ENCODE measurements at regions of chr19 and their contacts with region 1.

Region 1: DNA sequence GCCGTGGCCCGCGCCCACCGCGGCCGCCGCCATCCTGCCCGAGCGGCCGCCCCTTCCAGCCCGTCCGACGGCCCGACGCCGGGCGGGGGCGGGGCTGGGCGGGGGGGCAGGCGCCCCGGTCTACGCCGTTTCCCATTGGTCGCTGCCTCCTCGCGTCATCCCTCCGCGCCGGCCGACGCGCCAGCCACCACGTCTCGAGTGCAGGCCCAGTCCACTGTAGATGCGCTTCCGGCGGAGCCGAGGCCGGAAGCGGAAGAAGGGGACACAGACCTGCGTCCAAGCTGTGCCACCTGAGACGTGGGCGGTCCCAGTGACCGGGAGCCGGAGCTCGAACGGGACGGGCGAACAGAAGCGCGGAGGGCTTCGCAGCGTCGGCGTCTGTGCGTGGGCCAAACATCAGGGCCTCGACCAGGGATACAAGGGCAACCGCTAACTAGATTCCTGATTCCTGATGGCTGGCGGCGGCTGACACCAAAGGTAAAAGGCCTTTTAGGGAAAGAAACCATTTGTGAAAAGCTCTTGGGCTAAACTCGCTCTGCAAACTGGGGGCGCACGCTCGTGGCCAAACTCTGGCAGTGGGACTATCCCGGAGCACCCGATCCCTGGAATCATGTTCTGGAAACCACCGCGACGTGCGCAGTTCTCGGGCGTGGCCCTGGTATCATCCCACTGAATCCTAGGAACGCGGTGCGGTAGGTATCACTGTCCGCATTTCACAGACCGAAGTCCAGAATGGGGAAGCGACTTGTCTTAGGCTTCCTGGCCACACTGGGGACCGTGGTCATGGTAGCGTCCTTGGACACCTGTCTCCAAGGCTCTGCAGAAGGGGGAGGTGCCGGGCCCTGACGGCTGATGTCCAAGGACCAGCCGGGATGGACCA is at the start of gene SLC35E1:
- DNase-seq: peak; percentile 77
- H3K4me3 ChIP-seq: peak within 1 kb of the TSS; percentile 72 to 95 (median 84)
- H3K27ac ChIP-seq: peak within 1 kb of the TSS; percentile 90 to 95 (median 92)
- H3K4me1 ChIP-seq: peaks cover 15 to 63% (median 36%) of the 10 kb centered on the region in 3 donors
- H3K27me3 ChIP-seq: no peaks in the 10 kb centered on the region
- CTCF ChIP-seq: no peak
- POLR2A ChIP-seq: peak in 3 of 4 donors; percentile 68 to 77 (median 74)
- total RNA-seq, gene SLC35E1: 22.6 to 29.4 (median 25.3) TPM

Region 2: GRCh38 chr19:16628183-16628983 is 55.8 kb after region 1 on chr19 and contains the start of gene MED26:
- intact Hi-C with region 1: loop called (anchors 10 kb)
- DNase-seq: peak; percentile 82
- H3K4me3 ChIP-seq: peak within 1 kb of the TSS; percentile 97 to 100 (median 98)
- H3K27ac ChIP-seq: peak within 1 kb of the TSS; percentile 92 to 98 (median 94)
- H3K4me1 ChIP-seq: peaks cover 19 to 47% (median 19%) of the 10 kb centered on the region in 3 donors
- H3K27me3 ChIP-seq: no peaks in the 10 kb centered on the region
- CTCF ChIP-seq: peak in 2 of 6 experiments; percentile 17 to 44
- POLR2A ChIP-seq: peak in 3 of 4 donors; percentile 9 to 88 (median 80)
- total RNA-seq, gene MED26: 5.1 to 9.9 (median 8.4) TPM